H1 (cell line): ENCODE measurements at regions of chr2 and their contacts with region 1.

Region 1: DNA sequence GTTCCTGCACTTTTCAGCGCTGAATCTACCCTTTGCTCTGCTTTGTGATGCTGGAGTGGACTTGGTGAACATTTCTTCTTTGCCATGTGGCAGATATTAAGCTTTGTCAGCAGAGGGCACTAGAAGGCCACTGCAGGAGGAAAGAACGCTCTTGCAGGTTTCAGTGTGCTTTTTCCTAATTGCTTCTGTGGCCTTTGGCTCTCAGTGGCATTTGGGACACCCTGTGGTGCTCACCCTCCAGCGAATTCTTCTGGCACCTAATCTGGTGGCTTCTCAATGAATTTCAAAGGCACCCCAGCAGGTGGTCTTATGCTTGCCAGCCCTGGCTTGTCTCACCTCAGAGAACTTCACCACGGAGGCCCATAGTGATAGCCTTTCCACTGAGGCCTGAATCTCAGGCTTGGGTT is 146.7 kb downstream of the MYO3B start:
- DNase-seq: peak; percentile 67 to 75
- H3K4me3 ChIP-seq: no peak overlapping the region
- H3K27ac ChIP-seq: no peak overlapping the region
- H3K4me1 ChIP-seq: no peaks in the 10 kb centered on the region
- H3K27me3 ChIP-seq: no peaks in the 10 kb centered on the region
- CTCF ChIP-seq: peak; percentile 19 to 95 (median 95)
- EP300 ChIP-seq: peak in 1 of 2 experiments; percentile 28; a peak in 1 of 3 replicates
- POLR2A ChIP-seq: no peak
- RAD21 ChIP-seq: peak; percentile 99

Region 2: GRCh38 chr2:169955940-169956339 is 368.7 kb before region 1 on chr2:
- CTCF ChIA-PET with region 1: no interaction called
- POLR2A ChIA-PET with region 1: no interaction called
- DNase-seq: no peak
- H3K4me3 ChIP-seq: no peak overlapping the region
- H3K27ac ChIP-seq: no peak overlapping the region
- H3K4me1 ChIP-seq: no peaks in the 10 kb centered on the region
- H3K27me3 ChIP-seq: no peaks in the 10 kb centered on the region
- CTCF ChIP-seq: no peak
- EP300 ChIP-seq: no peak
- POLR2A ChIP-seq: no peak
- RAD21 ChIP-seq: no peak

Region 3: GRCh38 chr2:170313347-170313991 is 11.2 kb before region 1 on chr2:
- CTCF ChIA-PET with region 1: interaction called, 22 read pairs
- POLR2A ChIA-PET with region 1: interaction called, 3 read pairs
- DNase-seq: no peak
- H3K4me3 ChIP-seq: no peak overlapping the region
- H3K27ac ChIP-seq: no peak overlapping the region
- H3K4me1 ChIP-seq: no peaks in the 10 kb centered on the region
- H3K27me3 ChIP-seq: peaks cover 0 to 1% (median 0%) of the 10 kb centered on the region in 4 experiments; a peak in 1 of 7 replicates
- CTCF ChIP-seq: no peak
- EP300 ChIP-seq: no peak
- POLR2A ChIP-seq: no peak
- RAD21 ChIP-seq: no peak

Region 4: GRCh38 chr2:170341684-170342623 is 17.3 kb after region 1 on chr2:
- CTCF ChIA-PET with region 1: interaction called, 22 read pairs
- POLR2A ChIA-PET with region 1: interaction called, 3 read pairs
- DNase-seq: no peak
- H3K4me3 ChIP-seq: no peak overlapping the region
- H3K27ac ChIP-seq: no peak overlapping the region
- H3K4me1 ChIP-seq: peaks cover 0 to 13% (median 8%) of the 10 kb centered on the region in 4 experiments; a peak in 4 of 7 replicates
- H3K27me3 ChIP-seq: no peaks in the 10 kb centered on the region
- CTCF ChIP-seq: no peak
- EP300 ChIP-seq: no peak
- POLR2A ChIP-seq: no peak
- RAD21 ChIP-seq: no peak

Region 5: DNA sequence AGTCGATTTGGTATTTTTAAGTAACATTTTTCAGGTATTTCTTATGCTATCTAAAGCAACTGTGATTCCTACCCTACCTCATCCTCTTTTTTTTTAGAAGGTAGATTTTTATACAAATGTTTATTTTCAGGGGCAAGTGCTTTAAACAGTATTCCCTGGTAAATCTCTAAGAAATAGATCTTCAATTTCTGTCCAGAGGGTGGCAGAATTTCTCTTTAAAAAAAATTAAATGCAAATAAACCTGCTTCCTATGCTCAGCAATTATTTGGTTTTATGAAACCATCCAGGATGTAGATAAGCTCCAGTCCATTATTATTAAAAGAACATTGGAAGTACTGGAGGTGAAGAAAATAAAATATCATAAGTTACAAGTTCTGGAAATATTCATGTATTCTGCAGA is 45.3 kb after region 1 on chr2:
- CTCF ChIA-PET with region 1: interaction called, 15 read pairs
- POLR2A ChIA-PET with region 1: no interaction called
- DNase-seq: no peak
- H3K4me3 ChIP-seq: peak overlapping the region in 1 of 4 experiments; percentile 27; a peak in 1 of 8 replicates
- H3K27ac ChIP-seq: no peak overlapping the region
- H3K4me1 ChIP-seq: peaks cover 0 to 16% (median 10%) of the 10 kb centered on the region in 4 experiments; a peak in 4 of 7 replicates
- H3K27me3 ChIP-seq: no peaks in the 10 kb centered on the region
- CTCF ChIP-seq: no peak
- EP300 ChIP-seq: no peak
- POLR2A ChIP-seq: no peak
- RAD21 ChIP-seq: no peak; a peak in 1 of 4 replicates